Activated T-helper 2 cell treated with anti-CD3 and anti-CD28 coated beads, Interferon-gamma antibody, Interleukin-2, Interleukin-4, amounts not matched to agents 10 μg/mL and 5 μg/mL and 100 μg/mL, durations not matched to agents 14 hours and 24 hours and 36 hours (primary cell): ENCODE measurements at regions of chr9 and their contacts with region 1.

Region 1: DNA sequence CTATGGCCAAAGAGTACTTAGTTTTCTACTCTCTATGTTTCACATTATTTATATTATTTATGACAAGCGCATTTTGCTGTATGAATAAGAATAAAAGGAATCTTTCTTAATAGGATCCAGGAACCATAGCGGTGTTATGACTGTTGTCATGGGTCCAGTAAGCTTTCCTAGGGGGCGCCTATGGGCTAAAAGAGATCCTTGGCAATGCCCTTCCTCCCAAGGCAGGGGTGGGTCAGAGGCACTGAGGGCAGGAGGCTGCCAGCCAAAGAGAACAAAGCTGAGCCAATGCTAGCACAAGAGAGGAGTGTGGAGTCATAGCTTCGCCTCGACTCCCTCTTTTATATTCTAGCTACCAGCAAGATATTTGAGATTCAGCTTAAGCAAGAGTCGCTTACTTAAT is 98.4 kb upstream of the GNAQ start:
- DNase-seq: no peak
- H3K4me3 Mint-ChIP-seq: no peak overlapping the region
- H3K27ac Mint-ChIP-seq: no peak overlapping the region
- H3K4me1 Mint-ChIP-seq: peaks cover 24% of the 10 kb centered on the region
- H3K27me3 Mint-ChIP-seq: peaks cover 17% of the 10 kb centered on the region

Region 2: GRCh38 chr9:77847059-77847499 is 282.9 kb before region 1 on chr9:
- intact Hi-C with region 1: loop called (anchors 1 kb)
- DNase-seq: no peak
- H3K4me3 Mint-ChIP-seq: no peak overlapping the region
- H3K27ac Mint-ChIP-seq: peak overlapping the region; percentile 43
- H3K4me1 Mint-ChIP-seq: peaks cover 34% of the 10 kb centered on the region
- H3K27me3 Mint-ChIP-seq: no peaks in the 10 kb centered on the region

Region 3: GRCh38 chr9:78213712-78214111 is 83.7 kb after region 1 on chr9:
- intact Hi-C with region 1: loop called (anchors 5 kb)
- DNase-seq: no peak
- H3K4me3 Mint-ChIP-seq: no peak overlapping the region
- H3K27ac Mint-ChIP-seq: no peak overlapping the region
- H3K4me1 Mint-ChIP-seq: peaks cover 26% of the 10 kb centered on the region
- H3K27me3 Mint-ChIP-seq: no peaks in the 10 kb centered on the region

Region 4: GRCh38 chr9:78280982-78281668 is 151.1 kb after region 1 on chr9:
- intact Hi-C with region 1: no loop called
- DNase-seq: no peak
- H3K4me3 Mint-ChIP-seq: no peak overlapping the region
- H3K27ac Mint-ChIP-seq: no peak overlapping the region
- H3K4me1 Mint-ChIP-seq: peaks cover 5% of the 10 kb centered on the region
- H3K27me3 Mint-ChIP-seq: peaks cover 2% of the 10 kb centered on the region